ENCODE measurements at regions of chr14 and their contacts with region 1.

Region 1: GRCh38 chr14:21014761-21015190 is 10.1 kb downstream of the NDRG2 start:
- DNase-seq: peak; percentile 55 to 69
- H3K4me3 ChIP-seq: no peak overlapping the region
- H3K27ac ChIP-seq: no peak overlapping the region
- H3K4me1 ChIP-seq: no peaks in the 10 kb centered on the region
- H3K27me3 ChIP-seq: no peaks in the 10 kb centered on the region
- CTCF ChIP-seq: peak; percentile 83

Region 2: DNA sequence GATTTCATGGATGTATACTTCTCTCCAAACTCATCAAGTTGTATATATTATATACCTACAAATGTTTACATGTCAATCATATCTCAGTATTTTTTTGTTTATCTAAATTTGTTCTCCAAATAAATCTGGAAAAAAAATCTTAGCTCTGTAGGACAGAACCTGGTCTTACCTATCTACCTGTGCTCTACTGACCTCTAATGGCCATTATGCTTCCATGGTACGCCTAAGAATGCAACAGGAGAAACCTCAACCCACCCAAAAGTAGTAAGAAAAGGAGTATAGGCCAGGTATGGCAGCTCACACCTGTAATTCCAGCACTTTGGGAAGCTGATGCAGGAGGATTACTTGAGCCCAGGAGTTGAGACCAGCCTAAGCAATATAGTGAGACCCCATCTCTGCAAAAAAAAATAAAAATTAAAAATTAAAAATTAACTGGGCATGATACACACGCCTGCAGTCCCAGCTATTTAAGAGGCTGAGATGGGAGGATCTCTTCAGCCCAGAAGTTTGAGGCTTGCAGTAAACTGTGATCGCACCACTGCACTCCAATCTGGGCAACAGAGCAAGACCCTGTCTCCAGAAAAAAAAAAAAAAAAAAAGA is 767.0 kb before region 1 on chr14:
- CTCF ChIA-PET with region 1: no interaction called
- POLR2A ChIA-PET with region 1: no interaction called
- intact Hi-C with region 1: no loop called
- DNase-seq: peak in 1 of 2 experiments; percentile 35
- H3K4me3 ChIP-seq: no peak overlapping the region
- H3K27ac ChIP-seq: no peak overlapping the region
- H3K4me1 ChIP-seq: no peaks in the 10 kb centered on the region
- H3K27me3 ChIP-seq: no peaks in the 10 kb centered on the region
- CTCF ChIP-seq: peak; percentile 56

Region 3: DNA sequence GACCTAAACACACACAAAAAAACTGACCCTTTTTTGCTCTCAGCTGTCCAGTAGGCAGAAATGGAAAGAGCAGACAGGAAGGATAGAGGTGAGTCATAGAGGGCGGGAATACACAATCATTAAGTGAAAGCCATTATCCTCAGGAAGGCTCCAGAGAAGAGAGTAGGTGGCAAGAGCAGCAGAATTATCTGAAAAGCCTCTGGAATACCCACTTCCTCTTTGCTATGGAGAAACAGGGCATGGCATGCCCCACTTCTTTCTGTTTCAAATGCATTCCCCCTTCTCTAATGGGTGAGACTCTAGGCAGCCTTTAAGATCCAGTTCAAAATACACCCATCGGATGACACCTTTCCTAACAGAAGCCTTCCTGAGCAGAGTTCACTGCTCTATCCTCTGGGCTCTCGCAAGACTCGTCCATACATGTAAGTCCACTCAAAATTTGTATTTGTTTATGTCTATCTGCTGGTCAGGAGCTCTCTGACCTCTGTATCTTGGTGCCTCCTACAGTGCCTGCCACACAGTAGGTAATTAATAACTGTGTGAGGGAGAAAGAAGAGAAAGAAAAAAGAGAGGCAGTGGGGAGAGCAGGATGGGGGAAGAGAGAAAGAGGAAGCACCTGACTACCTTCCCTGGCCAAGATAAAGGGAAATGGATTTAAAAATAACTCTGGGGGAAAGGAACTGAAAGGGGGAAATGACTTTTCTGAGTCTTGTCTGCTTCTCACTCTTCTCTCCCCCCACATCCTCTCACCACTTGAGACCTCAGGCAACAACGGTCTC is 587.4 kb before region 1 on chr14:
- CTCF ChIA-PET with region 1: no interaction called
- POLR2A ChIA-PET with region 1: interaction called, 17 read pairs
- intact Hi-C with region 1: no loop called
- DNase-seq: no peak
- H3K4me3 ChIP-seq: no peak overlapping the region
- H3K27ac ChIP-seq: no peak overlapping the region
- H3K4me1 ChIP-seq: 0 out of 2 replicates have a peak, but pooled peaks cover 3% of the 10 kb centered on the region
- H3K27me3 ChIP-seq: no peaks in the 10 kb centered on the region
- CTCF ChIP-seq: no peak

Region 4: GRCh38 chr14:21024585-21025370 is 10.0 kb after region 1 on chr14 and contains the start of gene NDRG2:
- CTCF ChIA-PET with region 1: interaction called, 17 read pairs
- POLR2A ChIA-PET with region 1: no interaction called
- intact Hi-C with region 1: no loop called
- DNase-seq: peak in 1 of 2 experiments; percentile 56
- H3K4me3 ChIP-seq: peak within 1 kb of the TSS; percentile 59
- H3K27ac ChIP-seq: no peak within 1 kb of the TSS
- H3K4me1 ChIP-seq: 0 out of 2 replicates have a peak, but pooled peaks cover 6% of the 10 kb centered on the region
- H3K27me3 ChIP-seq: no peaks in the 10 kb centered on the region
- CTCF ChIP-seq: no peak
- total RNA-seq, gene NDRG2: 12.2 and 14.6 TPM in 2 replicates

Region 5: DNA sequence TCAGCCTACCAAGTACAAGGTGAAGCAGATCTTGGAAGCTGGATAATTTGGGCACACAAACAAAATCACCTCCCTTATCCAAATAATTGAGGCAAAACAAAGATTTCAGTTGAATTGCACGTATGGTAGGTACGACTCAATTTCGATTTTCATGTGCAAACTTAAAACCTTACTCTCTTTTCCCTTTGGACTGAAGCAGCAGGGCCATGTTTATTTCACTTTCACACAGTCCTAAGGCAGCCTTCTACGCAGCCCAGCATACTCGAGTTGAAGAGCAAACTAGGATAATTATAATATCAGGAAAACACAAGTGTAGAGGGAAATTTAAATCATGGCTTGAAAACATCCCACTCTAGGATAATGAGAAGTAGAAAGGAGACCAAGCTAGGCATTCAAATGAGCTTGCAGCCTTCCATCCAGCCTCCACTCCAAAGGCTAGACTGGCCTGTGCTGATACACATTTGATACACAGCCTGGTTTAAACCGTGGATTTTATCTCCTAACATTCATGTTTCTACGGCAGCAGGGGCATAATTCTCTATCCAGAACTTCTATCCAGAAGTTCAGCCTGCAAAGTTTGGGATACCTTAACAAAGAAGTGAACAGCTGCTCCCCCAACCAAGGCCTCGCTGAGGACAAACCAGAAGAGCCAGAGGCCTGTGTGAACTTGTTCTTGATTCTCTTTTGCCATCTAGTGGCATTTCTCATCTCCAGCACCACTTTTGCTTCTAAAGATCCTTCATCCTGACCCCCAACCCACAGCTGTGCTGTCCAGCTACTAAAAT is 25.0 kb after region 1 on chr14:
- CTCF ChIA-PET with region 1: interaction called, 18 read pairs
- POLR2A ChIA-PET with region 1: no interaction called
- intact Hi-C with region 1: loop called (anchors 1 kb)
- DNase-seq: peak; percentile 22 to 43
- H3K4me3 ChIP-seq: no peak overlapping the region
- H3K27ac ChIP-seq: no peak overlapping the region
- H3K4me1 ChIP-seq: peaks cover 15% of the 10 kb centered on the region
- H3K27me3 ChIP-seq: no peaks in the 10 kb centered on the region
- CTCF ChIP-seq: peak; percentile 57; the same call in 1 of the 2 replicates

Region 6: DNA sequence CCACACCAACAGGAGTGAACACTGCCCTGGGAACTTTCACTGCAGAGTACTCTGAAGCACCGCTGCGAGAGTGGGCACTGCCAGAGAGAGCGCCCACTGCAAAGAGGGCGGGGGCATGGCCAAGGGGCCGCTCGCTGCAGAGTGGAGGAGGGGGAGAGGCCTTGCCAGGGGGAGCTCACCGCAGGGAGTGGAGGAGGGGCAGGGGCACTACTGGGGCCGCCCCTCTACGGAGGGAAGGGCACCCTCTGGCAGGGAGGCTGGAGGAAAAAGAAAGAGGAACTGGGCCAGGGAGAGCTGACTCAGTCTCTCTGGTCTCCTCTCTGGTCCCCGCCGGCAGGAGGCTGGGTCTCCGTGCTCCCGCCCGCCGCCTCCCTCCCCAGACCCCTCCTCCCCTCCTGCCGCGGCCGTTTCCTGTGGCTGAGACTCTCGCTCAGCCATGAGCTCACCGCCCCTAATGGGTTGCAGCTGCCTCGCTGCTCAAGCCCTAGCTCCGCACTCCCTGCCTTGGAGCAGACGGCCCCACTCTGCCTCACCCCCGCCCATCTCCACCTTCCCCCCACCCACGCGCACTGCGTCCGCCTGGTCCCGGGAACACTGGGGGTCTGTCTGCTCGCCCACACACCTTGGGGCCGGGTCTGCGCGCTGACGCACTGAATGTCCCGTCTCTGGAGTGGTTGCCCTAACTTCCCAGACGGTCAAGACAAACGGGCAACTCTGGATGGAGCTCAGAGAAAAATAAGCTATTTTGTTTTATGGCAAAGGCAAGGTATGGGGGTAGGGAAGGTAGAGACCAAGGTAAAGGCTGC is 56.7 kb after region 1 on chr14:
- CTCF ChIA-PET with region 1: interaction called, 12 read pairs
- POLR2A ChIA-PET with region 1: no interaction called
- intact Hi-C with region 1: loop called (anchors 10 kb)
- DNase-seq: peak in 1 of 2 experiments; percentile 47
- H3K4me3 ChIP-seq: peak overlapping the region; percentile 64
- H3K27ac ChIP-seq: no peak overlapping the region
- H3K4me1 ChIP-seq: no peaks in the 10 kb centered on the region
- H3K27me3 ChIP-seq: no peaks in the 10 kb centered on the region; the same call in none of the 2 replicates
- CTCF ChIP-seq: no peak

Region 7: DNA sequence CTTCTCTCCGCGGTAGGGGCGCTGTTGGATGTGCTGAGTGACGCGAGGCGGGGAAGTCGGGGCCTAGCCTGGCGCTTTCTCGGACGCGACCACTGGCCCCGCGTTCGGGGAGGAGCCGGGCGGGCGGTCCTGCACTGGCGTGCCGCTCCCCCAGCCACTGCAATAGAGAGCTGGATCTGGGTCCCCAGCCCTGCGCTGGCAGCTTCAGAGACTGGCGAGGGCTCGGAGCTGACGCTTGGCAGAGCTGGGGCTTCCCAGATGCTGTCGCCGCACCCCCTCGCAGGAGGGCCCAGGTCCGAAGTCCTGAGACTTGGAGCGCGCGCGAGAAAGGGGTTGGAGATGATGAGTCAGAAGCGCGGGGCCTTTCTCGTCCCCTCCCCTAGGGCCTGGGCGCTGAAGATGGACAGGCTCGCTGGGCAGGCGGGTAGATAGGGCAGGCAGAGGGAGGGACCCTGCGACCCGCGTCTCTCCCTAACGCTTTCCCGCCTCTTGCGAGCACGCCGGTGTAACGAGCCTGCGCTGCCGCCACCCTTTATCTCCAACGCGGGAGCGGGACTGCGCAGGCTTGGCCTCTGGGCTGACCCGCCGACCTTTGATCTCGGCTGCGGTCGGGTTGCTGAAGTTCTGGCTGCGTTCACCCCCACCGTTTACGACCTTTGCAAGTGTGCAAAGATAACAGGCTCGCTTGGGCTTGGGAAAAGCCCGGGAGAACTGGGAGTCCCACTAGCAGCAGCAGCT is 89.1 kb after region 1 on chr14:
- CTCF ChIA-PET with region 1: interaction called, 20 read pairs
- POLR2A ChIA-PET with region 1: no interaction called
- intact Hi-C with region 1: loop called (anchors 1 kb)
- DNase-seq: peak; percentile 81 to 88
- H3K4me3 ChIP-seq: peak overlapping the region; percentile 70
- H3K27ac ChIP-seq: peak overlapping the region; percentile 89
- H3K4me1 ChIP-seq: peaks cover 54% of the 10 kb centered on the region
- H3K27me3 ChIP-seq: no peaks in the 10 kb centered on the region
- CTCF ChIP-seq: no peak

Region 8: DNA sequence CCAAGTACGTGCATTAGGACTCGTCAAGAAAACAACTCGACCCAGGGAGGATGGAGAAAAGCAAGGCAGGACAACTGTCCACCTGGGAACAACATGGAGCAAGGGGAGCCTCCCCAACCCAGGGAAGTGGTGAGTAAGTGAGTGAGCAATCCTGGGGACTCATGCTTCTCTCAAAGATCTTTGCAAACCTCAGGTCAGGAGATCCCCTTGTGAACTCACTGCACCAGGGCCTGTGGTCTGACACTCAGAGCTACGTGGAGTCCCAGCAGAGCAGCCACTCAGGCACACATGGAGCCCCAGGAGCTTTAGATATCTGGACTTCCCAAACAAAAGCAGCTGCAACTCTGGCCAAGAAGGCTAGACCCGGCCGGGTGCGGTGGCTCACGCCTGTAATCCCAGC is 153.3 kb after region 1 on chr14:
- CTCF ChIA-PET with region 1: no interaction called
- POLR2A ChIA-PET with region 1: no interaction called
- intact Hi-C with region 1: no loop called
- DNase-seq: no peak
- H3K4me3 ChIP-seq: no peak overlapping the region
- H3K27ac ChIP-seq: no peak overlapping the region
- H3K4me1 ChIP-seq: no peaks in the 10 kb centered on the region
- H3K27me3 ChIP-seq: no peaks in the 10 kb centered on the region
- CTCF ChIP-seq: no peak

Region 9: DNA sequence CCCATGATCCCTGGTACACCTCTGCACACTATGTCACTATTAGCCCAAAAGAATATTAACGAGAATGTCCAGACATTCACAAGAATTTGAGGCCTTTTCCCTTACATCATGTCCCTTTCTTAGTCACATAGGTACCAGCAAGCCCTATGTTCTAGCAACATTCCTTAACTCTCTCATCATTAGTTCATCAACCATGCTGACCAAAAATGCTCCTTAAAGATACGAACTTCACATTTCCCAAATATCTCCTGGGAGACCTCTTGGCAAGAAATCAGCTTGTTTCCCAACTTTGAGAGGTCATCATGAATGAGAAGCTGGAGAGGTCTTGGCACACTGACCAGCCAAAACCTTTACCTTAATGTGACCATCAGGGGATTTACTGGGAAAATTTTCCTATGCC is 506.7 kb after region 1 on chr14:
- CTCF ChIA-PET with region 1: no interaction called
- POLR2A ChIA-PET with region 1: no interaction called
- intact Hi-C with region 1: no loop called
- DNase-seq: no peak
- H3K4me3 ChIP-seq: no peak overlapping the region
- H3K27ac ChIP-seq: no peak overlapping the region
- H3K4me1 ChIP-seq: no peaks in the 10 kb centered on the region
- H3K27me3 ChIP-seq: no peaks in the 10 kb centered on the region
- CTCF ChIP-seq: no peak